Sigmoid colon (tissue), 7 donors: ENCODE measurements at regions of chr11 and their contacts with region 1.

Region 1: DNA sequence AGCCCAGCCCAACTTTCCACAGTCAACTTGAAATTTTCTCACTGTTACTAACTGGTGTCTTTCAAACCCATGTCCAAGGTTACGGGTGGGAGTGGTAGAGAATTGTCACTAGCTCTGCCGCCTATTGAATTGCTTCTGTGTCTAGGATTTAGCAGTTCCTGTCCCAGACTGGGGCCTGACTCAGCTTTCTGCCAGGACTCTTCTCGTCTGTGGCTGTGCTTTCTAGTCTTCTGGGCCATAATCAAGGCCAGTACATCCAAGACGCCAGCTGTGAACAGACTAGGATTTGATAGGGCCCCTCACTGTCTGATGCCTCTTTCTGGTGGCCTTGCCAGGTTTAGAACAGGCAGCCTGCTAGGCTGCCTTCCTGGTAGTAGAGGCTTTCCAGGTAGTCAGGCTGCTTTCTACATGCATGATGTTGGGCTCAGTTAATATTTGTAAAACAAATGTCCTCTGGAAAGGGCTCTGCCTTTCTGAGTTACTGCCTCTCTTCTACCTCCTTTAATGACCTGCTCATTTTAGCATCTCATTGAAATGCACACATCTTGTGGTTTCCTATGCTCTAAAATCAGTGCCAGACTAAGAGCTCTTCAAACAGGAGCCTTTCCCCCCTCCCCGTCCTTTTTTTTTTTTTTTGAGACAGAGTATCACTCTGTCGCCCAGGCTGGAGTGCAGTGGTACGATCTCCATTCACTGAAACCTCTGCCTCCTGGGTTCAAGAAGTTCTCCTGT is 13.1 kb upstream of the HIKESHI start:
- DNase-seq: no peak
- H3K4me3 ChIP-seq: no peak overlapping the region
- H3K27ac ChIP-seq: no peak overlapping the region
- H3K4me1 ChIP-seq: no peaks in the 10 kb centered on the region
- H3K27me3 ChIP-seq: no peaks in the 10 kb centered on the region
- CTCF ChIP-seq: no peak
- EP300 ChIP-seq: no peak
- POLR2A ChIP-seq: no peak

Region 2: DNA sequence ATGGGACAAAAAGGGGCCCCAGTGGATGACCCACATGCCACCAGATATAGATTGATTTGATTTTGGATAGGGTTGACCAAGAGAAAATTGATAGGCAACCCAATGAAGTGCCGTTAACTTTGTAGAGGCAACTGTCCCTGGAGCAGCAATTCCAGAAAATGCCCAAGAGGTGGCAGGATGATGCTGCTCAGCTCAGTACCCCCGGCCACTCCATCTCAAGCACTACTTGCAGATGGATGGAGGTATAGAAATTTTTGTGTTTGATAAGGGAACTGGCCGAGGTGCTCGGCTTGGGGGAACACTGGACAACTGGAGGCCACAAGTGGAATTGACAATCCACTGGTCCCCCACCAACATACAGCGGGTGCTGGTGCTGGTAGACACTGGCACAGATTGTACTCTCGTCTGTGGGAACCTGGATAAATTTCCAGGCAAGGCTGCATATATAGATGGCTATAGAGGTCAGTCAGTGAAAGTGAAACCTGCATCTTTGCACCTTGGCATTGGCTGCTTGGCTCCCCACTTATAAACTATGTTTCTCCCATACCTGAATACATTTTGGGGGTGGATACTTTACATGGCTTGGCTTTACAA is 347.5 kb before region 1 on chr11:
- intact Hi-C with region 1: loop called (anchors 10 kb)
- DNase-seq: peak; percentile 77
- H3K4me3 ChIP-seq: no peak overlapping the region
- H3K27ac ChIP-seq: no peak overlapping the region
- H3K4me1 ChIP-seq: no peaks in the 10 kb centered on the region
- H3K27me3 ChIP-seq: no peaks in the 10 kb centered on the region
- CTCF ChIP-seq: peak; percentile 21 to 77 (median 68)
- EP300 ChIP-seq: no peak
- POLR2A ChIP-seq: no peak

Region 3: GRCh38 chr11:86228269-86229220 is 60.4 kb before region 1 on chr11:
- intact Hi-C with region 1: no loop called
- DNase-seq: no peak
- H3K4me3 ChIP-seq: no peak overlapping the region
- H3K27ac ChIP-seq: no peak overlapping the region
- H3K4me1 ChIP-seq: no peaks in the 10 kb centered on the region
- H3K27me3 ChIP-seq: no peaks in the 10 kb centered on the region
- CTCF ChIP-seq: no peak
- EP300 ChIP-seq: no peak
- POLR2A ChIP-seq: no peak

Region 4: GRCh38 chr11:86274503-86274902 is 14.4 kb before region 1 on chr11:
- intact Hi-C with region 1: no loop called
- DNase-seq: no peak
- H3K4me3 ChIP-seq: no peak overlapping the region
- H3K27ac ChIP-seq: no peak overlapping the region
- H3K4me1 ChIP-seq: no peaks in the 10 kb centered on the region
- H3K27me3 ChIP-seq: no peaks in the 10 kb centered on the region
- CTCF ChIP-seq: no peak
- EP300 ChIP-seq: no peak
- POLR2A ChIP-seq: no peak